ENCODE measurements at regions of chr9 and their contacts with region 1.

Region 1: DNA sequence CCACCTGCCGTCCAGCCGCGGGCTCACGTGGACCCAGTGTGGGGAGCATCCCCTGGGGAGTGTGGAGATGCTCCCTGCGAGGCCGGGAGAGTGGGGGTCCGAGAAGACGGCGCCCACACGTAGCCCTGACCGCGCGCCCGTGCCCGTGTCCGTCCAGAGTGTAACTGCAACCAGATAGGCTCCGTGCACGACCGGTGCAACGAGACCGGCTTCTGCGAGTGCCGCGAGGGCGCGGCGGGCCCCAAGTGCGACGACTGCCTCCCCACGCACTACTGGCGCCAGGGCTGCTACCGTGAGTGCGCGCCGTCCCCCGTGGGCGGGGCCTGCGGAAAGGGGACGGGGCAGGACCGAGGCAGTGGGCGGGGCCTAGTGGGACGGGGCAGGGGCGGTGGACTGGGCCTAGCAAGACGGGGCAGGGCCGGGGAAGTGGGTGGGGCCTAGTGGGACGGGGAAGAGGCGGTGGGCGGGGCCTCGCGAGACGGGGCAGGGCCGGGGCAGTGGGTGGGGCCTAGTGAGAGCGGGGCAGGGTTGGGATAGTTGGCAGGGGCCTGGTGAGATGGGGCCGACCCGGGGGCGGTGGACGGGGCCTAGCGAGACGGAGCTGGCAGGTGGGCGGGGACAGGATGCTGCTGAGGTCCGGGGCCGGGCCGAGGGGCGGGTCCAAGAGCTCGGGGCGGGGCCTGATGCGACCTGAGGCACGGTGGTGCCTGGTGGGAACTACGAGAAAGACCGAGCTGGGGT is 79.1 kb downstream of the NTNG2 start:
- DNase-seq: peak; percentile 100
- ATAC-seq: peak; percentile 95
- H3K4me3 Mint-ChIP-seq: peak overlapping the region; percentile 97
- H3K27ac Mint-ChIP-seq: peak overlapping the region; percentile 94
- H3K4me1 Mint-ChIP-seq: peaks cover 9% of the 10 kb centered on the region
- H3K27me3 Mint-ChIP-seq: peaks cover 21% of the 10 kb centered on the region

Region 2: DNA sequence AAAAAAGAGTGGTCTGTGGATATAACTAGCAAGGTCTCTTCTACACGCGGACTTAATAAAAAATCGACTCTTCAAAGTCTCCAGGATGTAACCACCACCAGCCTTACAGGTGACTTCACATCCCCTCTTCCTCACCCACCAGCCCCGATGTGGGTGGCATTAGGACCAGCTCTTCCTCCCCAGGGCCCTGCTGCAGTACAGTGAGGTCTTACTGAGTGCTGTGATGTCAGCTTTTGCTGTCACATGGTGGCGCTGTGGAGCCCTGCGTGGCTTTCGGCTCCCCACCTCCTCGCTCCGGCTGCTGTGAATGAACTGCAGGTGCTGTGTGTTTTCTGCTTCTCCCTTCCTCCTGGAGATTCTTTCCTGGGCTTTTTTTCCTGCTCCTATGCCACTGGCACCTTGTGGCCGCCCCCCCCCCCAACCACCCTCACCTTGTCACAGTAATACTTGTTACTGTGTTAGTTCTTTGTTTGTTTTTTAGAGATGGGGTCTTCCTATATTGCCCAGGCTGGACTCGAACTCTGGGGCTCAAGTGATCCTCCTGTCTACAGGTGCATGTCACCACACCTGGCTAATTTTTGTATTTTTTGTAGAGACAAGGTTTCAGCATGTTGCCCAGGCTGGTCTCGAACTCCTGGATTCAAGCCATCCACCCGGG is 485.3 kb before region 1 on chr9:
- CTCF ChIA-PET with region 1: interaction called, 152 read pairs
- DNase-seq: peak; percentile 91
- ATAC-seq: peak; percentile 97
- H3K4me3 Mint-ChIP-seq: no peak overlapping the region
- H3K27ac Mint-ChIP-seq: no peak overlapping the region
- H3K4me1 Mint-ChIP-seq: peaks cover 17% of the 10 kb centered on the region
- H3K27me3 Mint-ChIP-seq: peaks cover 14% of the 10 kb centered on the region

Region 3: DNA sequence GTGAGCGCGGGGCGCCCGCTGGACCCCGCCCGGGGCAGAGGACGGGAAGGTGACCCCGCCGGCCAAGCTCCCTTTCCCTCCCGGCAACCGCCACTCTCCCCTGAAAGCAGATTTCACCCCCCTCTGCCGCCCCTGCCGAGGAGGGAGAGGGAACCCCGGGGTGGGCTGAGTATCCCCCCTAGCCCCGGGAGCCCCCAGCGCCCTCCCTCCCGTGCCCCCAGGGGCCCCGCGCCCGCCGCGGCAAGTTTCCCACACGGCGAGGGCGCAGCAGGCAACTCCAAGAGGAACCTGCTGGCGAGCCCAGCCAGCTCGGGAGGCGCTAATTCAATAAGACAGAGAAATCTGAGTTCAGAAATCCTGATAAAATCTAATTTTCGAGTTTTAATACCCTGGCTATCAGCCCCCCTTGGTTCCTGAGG is 77.5 kb before region 1 on chr9:
- CTCF ChIA-PET with region 1: interaction called, 176 read pairs
- DNase-seq: no peak
- ATAC-seq: no peak
- H3K4me3 Mint-ChIP-seq: no peak overlapping the region
- H3K27ac Mint-ChIP-seq: no peak overlapping the region
- H3K4me1 Mint-ChIP-seq: peaks cover 14% of the 10 kb centered on the region
- H3K27me3 Mint-ChIP-seq: peaks cover 54% of the 10 kb centered on the region

Region 4: DNA sequence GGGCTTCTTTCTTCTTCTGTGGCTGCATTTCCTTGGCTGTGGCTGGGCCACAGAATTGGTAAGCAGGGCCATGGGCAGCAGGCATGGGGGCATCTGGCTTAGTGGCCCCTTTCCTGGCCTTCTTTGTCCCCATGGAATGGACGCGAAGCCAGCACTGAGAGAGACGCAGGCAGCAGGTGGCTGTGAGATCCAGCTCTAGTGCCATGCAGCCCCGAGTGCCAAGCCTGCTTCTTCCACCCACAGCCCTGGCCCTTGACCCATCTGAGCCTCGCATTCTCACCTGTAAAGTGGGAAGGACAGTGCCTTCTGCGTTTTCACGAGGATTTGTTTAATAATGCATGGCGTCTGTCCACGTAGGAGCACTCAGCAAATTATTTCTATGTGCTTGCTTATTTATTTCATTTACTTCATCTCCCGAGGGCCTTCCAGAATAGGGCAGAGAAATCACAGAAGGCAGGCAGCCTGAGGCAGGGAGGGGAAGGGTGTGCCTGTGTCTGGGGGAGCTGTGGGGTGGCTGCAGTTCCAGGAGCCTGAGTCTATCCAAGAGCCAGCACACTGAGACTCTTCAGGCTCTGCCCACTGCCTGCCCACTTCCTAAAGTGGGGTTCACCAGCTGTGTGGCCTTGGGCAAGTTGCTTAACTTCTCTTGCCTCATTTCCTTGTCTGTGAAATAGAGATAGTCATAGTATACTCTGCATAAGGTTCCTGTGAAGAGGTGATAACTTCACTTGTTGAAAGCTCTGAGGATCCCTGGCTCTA is 23.9 kb before region 1 on chr9:
- CTCF ChIA-PET with region 1: interaction called, 10 read pairs
- DNase-seq: no peak
- ATAC-seq: no peak
- H3K4me3 Mint-ChIP-seq: no peak overlapping the region
- H3K27ac Mint-ChIP-seq: no peak overlapping the region
- H3K4me1 Mint-ChIP-seq: peaks cover 7% of the 10 kb centered on the region
- H3K27me3 Mint-ChIP-seq: peaks cover 7% of the 10 kb centered on the region

Region 5: GRCh38 chr9:132268725-132269352 is 27.9 kb after region 1 on chr9:
- CTCF ChIA-PET with region 1: interaction called, 15 read pairs
- DNase-seq: peak; percentile 77
- ATAC-seq: peak; percentile 77
- H3K4me3 Mint-ChIP-seq: no peak overlapping the region
- H3K27ac Mint-ChIP-seq: peak overlapping the region; percentile 64
- H3K4me1 Mint-ChIP-seq: peaks cover 11% of the 10 kb centered on the region
- H3K27me3 Mint-ChIP-seq: no peaks in the 10 kb centered on the region

Region 6: GRCh38 chr9:132312873-132313272 is 72.0 kb after region 1 on chr9:
- CTCF ChIA-PET with region 1: no interaction called
- DNase-seq: no peak
- ATAC-seq: no peak
- H3K4me3 Mint-ChIP-seq: no peak overlapping the region
- H3K27ac Mint-ChIP-seq: peak overlapping the region; percentile 8
- H3K4me1 Mint-ChIP-seq: peaks cover 4% of the 10 kb centered on the region
- H3K27me3 Mint-ChIP-seq: no peaks in the 10 kb centered on the region

Region 7: GRCh38 chr9:132341177-132341840 is 100.4 kb after region 1 on chr9:
- CTCF ChIA-PET with region 1: no interaction called
- DNase-seq: no peak
- ATAC-seq: no peak
- H3K4me3 Mint-ChIP-seq: no peak overlapping the region
- H3K27ac Mint-ChIP-seq: no peak overlapping the region
- H3K4me1 Mint-ChIP-seq: peaks cover 4% of the 10 kb centered on the region
- H3K27me3 Mint-ChIP-seq: no peaks in the 10 kb centered on the region